Activated CD8-positive, alpha-beta T cell treated with anti-CD3 and anti-CD28 coated beads, Interleukin-2, amount 10 ng/mL, durations not matched to agents 7 days and 5 days (primary cell): ENCODE measurements at regions of chr6 and their contacts with region 1.

Region 1: GRCh38 chr6:165884813-165885765 is 222.0 kb upstream of the PDE10A start:
- DNase-seq: peak; percentile 82
- ATAC-seq: peak; percentile 99
- H3K4me3 Mint-ChIP-seq: no peak overlapping the region
- H3K27ac Mint-ChIP-seq: no peak overlapping the region
- H3K4me1 Mint-ChIP-seq: peaks cover 13% of the 10 kb centered on the region
- H3K27me3 Mint-ChIP-seq: peaks cover 9% of the 10 kb centered on the region

Region 2: GRCh38 chr6:165899611-165900010 is 14.5 kb after region 1 on chr6:
- CTCF ChIA-PET with region 1: no interaction called
- POLR2A ChIA-PET with region 1: no interaction called
- DNase-seq: no peak
- ATAC-seq: no peak
- H3K4me3 Mint-ChIP-seq: no peak overlapping the region
- H3K27ac Mint-ChIP-seq: no peak overlapping the region
- H3K4me1 Mint-ChIP-seq: no peaks in the 10 kb centered on the region
- H3K27me3 Mint-ChIP-seq: no peaks in the 10 kb centered on the region

Region 3: GRCh38 chr6:165922309-165922794 is 37.3 kb after region 1 on chr6:
- CTCF ChIA-PET with region 1: no interaction called
- POLR2A ChIA-PET with region 1: no interaction called
- DNase-seq: no peak
- ATAC-seq: no peak
- H3K4me3 Mint-ChIP-seq: no peak overlapping the region
- H3K27ac Mint-ChIP-seq: no peak overlapping the region
- H3K4me1 Mint-ChIP-seq: no peaks in the 10 kb centered on the region
- H3K27me3 Mint-ChIP-seq: no peaks in the 10 kb centered on the region

Region 4: DNA sequence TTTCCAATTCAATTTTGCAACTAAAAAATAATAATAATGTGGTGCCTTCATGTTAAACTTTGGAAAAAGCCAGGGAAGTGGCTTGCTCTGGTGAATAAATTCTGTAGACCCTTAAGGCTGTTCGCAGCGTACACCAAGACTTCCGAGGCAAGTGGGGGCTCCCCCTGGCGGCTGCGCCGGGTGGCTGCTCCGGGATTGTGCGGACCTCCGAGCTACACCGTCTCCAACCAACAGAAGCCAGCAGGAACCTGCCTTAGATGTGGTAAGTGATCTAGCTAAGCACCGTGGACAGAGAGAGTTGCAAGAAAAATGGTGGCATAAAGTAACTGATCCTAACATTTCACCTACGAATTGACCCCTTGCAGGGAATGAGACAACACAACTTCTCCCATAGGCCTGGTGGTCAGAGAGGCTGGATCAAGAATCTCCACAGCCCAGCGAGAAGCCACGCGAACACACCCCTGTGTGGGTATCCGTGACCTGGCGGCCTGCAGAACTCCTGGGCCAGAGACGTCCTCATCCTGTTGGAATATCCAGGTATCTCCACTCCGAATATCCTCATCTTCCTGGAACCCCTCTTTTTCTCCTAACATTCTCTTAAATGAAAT is 212.9 kb after region 1 on chr6:
- CTCF ChIA-PET with region 1: interaction called, 39 read pairs
- POLR2A ChIA-PET with region 1: no interaction called
- DNase-seq: peak; percentile 72
- ATAC-seq: peak; percentile 90
- H3K4me3 Mint-ChIP-seq: peak overlapping the region; percentile 20
- H3K27ac Mint-ChIP-seq: no peak overlapping the region
- H3K4me1 Mint-ChIP-seq: peaks cover 2% of the 10 kb centered on the region
- H3K27me3 Mint-ChIP-seq: peaks cover 36% of the 10 kb centered on the region

Region 5: GRCh38 chr6:166106076-166106686 is 221.1 kb after region 1 on chr6:
- CTCF ChIA-PET with region 1: interaction called, 39 read pairs
- POLR2A ChIA-PET with region 1: no interaction called
- DNase-seq: peak; percentile 80
- ATAC-seq: peak; percentile 76
- H3K4me3 Mint-ChIP-seq: no peak overlapping the region
- H3K27ac Mint-ChIP-seq: no peak overlapping the region
- H3K4me1 Mint-ChIP-seq: peaks cover 2% of the 10 kb centered on the region
- H3K27me3 Mint-ChIP-seq: peaks cover 39% of the 10 kb centered on the region